Left lung (tissue), 14 donors: ENCODE measurements at regions of chr22 and their contacts with region 1.

Region 1: DNA sequence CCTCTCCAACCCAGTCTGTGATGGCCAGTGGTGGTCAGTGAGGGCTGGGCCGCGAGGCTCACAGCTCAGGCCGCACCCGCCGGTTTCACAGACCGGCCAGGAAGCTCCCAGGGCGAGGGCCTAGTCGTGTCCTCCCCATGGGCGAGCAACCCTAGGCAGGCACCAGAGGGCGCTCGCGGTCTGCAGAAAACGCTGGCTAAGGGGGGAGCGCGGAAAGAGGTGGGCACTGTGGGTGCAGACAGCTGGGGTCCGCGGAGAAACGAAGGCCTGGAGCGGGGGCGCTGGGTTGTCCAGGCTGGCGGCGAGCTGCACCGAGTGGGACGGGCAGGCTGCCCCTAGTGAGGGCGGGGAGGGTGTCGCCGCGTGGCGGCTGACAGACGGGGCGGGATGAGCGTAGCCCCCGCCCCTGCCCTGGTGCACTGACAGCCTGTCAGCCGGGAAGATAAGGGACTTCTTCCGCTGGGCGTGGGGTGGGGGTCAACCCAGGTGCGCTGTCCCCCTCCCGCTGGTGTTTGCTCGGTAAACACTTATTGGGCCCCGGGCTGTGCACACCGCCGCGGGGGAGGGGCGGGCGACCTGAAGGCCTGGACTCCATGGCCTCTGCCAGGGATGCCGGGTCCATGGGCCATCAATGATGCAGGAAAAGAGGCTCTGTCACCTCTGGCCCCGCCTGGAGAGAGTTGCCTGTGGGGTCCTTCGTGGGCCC is 7.5 kb downstream of the GP1BB start:
- DNase-seq: peak; percentile 76 to 95 (median 85)
- ATAC-seq: peak; percentile 96
- H3K4me3 ChIP-seq: peak overlapping the region; percentile 15 to 31
- H3K27ac ChIP-seq: no peak overlapping the region
- H3K4me1 ChIP-seq: no peaks in the 10 kb centered on the region
- H3K27me3 ChIP-seq: peaks cover 0 to 8% of the 10 kb centered on the region in 2 donors
- CTCF ChIP-seq: peak; percentile 88 to 98

Region 2: GRCh38 chr22:19909350-19910179 is 178.8 kb after region 1 on chr22:
- intact Hi-C with region 1: loop called in 1 of 2 experiments (anchors 5 kb)
- DNase-seq: peak; percentile 76 to 91 (median 82)
- ATAC-seq: peak; percentile 96
- H3K4me3 ChIP-seq: no peak overlapping the region
- H3K27ac ChIP-seq: no peak overlapping the region
- H3K4me1 ChIP-seq: no peaks in the 10 kb centered on the region
- H3K27me3 ChIP-seq: no peaks in the 10 kb centered on the region
- CTCF ChIP-seq: peak; percentile 86 to 95